CD8-positive, alpha-beta memory T cell (primary cell): ENCODE measurements at regions of chr2 and their contacts with region 1.

Region 1: DNA sequence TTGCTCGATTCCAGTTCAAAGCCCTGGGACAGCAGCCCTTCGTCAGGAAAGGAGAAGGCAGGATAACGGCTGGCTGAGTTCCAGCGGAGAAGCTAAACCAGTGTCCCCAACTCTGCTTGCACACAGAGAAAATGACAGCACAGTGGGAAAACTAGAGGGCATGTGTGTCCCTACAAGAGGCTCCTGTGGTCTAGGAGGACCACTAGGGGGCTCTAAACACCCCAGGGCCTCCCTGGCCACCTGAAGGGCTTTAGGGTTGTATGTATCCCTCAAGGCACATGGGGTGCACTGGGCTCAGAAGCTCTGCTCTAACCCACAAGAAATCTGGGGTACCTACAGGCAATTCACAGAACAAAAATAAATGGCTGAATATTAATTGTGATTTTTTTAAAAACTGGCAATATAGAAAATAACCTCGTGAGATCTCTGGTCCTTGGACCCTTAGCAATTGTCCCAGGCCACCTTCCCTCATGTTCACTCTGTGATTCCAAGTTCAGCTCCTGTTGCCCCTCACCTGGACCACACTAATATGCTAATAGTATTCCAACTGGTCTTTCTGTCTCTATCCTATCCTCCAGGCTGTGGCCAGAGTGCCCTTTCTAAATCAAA is 17.5 kb downstream of the STAT1 start:
- DNase-seq: peak in 4 of 5 donors; percentile 18 to 69 (median 35)
- H3K4me3 ChIP-seq: no peak overlapping the region
- H3K4me3 Mint-ChIP-seq: no peak overlapping the region
- H3K27ac ChIP-seq: no peak overlapping the region
- H3K27ac Mint-ChIP-seq: peak overlapping the region; percentile 4 to 87 (median 83)
- H3K4me1 ChIP-seq: no peaks in the 10 kb centered on the region
- H3K4me1 Mint-ChIP-seq: peaks cover 28 to 60% (median 53%) of the 10 kb centered on the region in 3 donors
- H3K27me3 ChIP-seq: no peaks in the 10 kb centered on the region
- H3K27me3 Mint-ChIP-seq: no peaks in the 10 kb centered on the region

Region 2: DNA sequence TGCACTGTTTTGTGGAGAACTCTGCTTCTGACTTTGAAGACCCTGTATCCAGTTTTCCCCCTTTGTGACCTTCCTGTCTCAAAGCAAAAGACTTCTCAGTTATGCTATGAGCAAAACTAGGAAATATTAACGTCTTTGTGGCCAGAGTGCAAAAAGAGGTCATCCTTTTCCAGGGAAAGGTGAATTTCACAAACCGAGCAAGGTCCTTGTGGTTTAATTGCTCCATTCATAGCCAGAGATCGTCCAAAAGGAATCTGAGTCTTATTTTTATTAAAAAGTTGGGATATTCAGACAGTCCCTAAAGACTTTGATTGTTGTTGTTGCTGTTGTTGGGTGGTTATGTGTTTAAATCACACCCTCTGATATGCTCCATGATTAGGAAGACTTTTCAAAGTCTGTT is 270.2 kb before region 1 on chr2:
- CTCF ChIA-PET with region 1: no interaction called
- POLR2A ChIA-PET with region 1: no interaction called
- DNase-seq: no peak
- H3K4me3 ChIP-seq: no peak overlapping the region
- H3K4me3 Mint-ChIP-seq: no peak overlapping the region
- H3K27ac ChIP-seq: no peak overlapping the region
- H3K27ac Mint-ChIP-seq: no peak overlapping the region
- H3K4me1 ChIP-seq: no peaks in the 10 kb centered on the region
- H3K4me1 Mint-ChIP-seq: peaks cover 9 to 20% (median 20%) of the 10 kb centered on the region in 3 donors
- H3K27me3 ChIP-seq: no peaks in the 10 kb centered on the region
- H3K27me3 Mint-ChIP-seq: peaks cover 0 to 7% of the 10 kb centered on the region in 2 donors

Region 3: DNA sequence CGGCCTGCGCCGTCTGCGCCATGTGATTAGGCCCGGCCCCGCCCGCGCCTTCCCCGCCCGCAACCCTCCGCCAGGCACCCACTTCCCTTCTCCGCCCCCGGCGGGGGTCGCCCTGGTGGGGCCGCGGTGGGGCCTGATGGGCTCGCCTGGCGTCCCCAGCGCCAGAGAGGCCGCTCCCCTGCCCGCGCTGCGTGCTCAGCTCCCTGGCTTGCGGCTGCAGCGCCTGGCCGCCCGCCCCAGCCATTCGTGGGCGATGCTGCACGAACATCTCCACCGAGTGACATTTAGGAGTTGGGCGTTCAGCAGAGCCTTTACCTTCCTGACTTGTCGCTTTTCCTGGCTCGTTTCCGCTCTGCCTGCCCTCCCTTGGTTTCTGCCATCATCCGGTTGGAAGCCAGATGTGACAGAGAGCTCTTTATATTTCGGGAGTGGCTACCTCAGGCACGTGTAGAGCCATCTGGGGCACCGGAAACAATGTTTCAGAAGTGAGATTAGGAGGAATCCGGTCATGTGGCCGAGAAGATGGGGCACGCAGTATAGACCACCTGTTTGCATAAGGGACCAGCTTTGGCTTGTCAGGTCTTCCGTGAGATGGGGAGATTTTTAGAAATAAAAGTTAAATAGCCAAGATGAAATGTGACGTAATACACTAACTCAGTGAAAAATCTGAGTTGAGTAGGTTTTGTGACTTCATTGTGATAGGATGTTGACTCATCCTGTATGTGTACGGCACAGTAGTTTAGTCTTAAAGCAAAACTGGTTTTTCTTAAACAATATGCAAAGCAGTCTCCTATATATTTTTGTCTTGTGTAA is 114.6 kb before region 1 on chr2:
- CTCF ChIA-PET with region 1: no interaction called
- POLR2A ChIA-PET with region 1: no interaction called
- DNase-seq: peak; percentile 64 to 89 (median 84)
- H3K4me3 ChIP-seq: peak overlapping the region; percentile 95
- H3K4me3 Mint-ChIP-seq: peak overlapping the region; percentile 93 to 96 (median 94)
- H3K27ac ChIP-seq: peak overlapping the region; percentile 92
- H3K27ac Mint-ChIP-seq: peak overlapping the region; percentile 95 to 99 (median 96)
- H3K4me1 ChIP-seq: peaks cover 52% of the 10 kb centered on the region
- H3K4me1 Mint-ChIP-seq: peaks cover 39 to 64% (median 52%) of the 10 kb centered on the region in 3 donors
- H3K27me3 ChIP-seq: no peaks in the 10 kb centered on the region
- H3K27me3 Mint-ChIP-seq: peaks cover 0 to 6% of the 10 kb centered on the region in 2 donors

Region 4: GRCh38 chr2:190896477-190896876 is 100.0 kb before region 1 on chr2:
- CTCF ChIA-PET with region 1: no interaction called
- POLR2A ChIA-PET with region 1: no interaction called
- DNase-seq: no peak
- H3K4me3 ChIP-seq: no peak overlapping the region
- H3K4me3 Mint-ChIP-seq: no peak overlapping the region
- H3K27ac ChIP-seq: peak overlapping the region; percentile 18
- H3K27ac Mint-ChIP-seq: peak overlapping the region in 4 of 8 donors; percentile 17 to 46 (median 35)
- H3K4me1 ChIP-seq: peaks cover 5% of the 10 kb centered on the region
- H3K4me1 Mint-ChIP-seq: peaks cover 36 to 52% (median 50%) of the 10 kb centered on the region in 3 donors
- H3K27me3 ChIP-seq: no peaks in the 10 kb centered on the region
- H3K27me3 Mint-ChIP-seq: no peaks in the 10 kb centered on the region

Region 5: GRCh38 chr2:190940454-190940853 is 56.0 kb before region 1 on chr2:
- CTCF ChIA-PET with region 1: no interaction called
- POLR2A ChIA-PET with region 1: no interaction called
- DNase-seq: no peak
- H3K4me3 ChIP-seq: no peak overlapping the region
- H3K4me3 Mint-ChIP-seq: no peak overlapping the region
- H3K27ac ChIP-seq: no peak overlapping the region
- H3K27ac Mint-ChIP-seq: peak overlapping the region in 1 of 8 donors; percentile 9
- H3K4me1 ChIP-seq: peaks cover 3% of the 10 kb centered on the region
- H3K4me1 Mint-ChIP-seq: peaks cover 4 to 26% (median 22%) of the 10 kb centered on the region in 3 donors
- H3K27me3 ChIP-seq: no peaks in the 10 kb centered on the region
- H3K27me3 Mint-ChIP-seq: no peaks in the 10 kb centered on the region

Region 6: GRCh38 chr2:191012845-191013681 is 16.6 kb after region 1 on chr2:
- CTCF ChIA-PET with region 1: interaction called, 13 read pairs
- POLR2A ChIA-PET with region 1: interaction called, 3 read pairs
- DNase-seq: no peak
- H3K4me3 ChIP-seq: peak overlapping the region; percentile 90
- H3K4me3 Mint-ChIP-seq: no peak overlapping the region
- H3K27ac ChIP-seq: peak overlapping the region; percentile 69
- H3K27ac Mint-ChIP-seq: no peak overlapping the region
- H3K4me1 ChIP-seq: peaks cover 68% of the 10 kb centered on the region
- H3K4me1 Mint-ChIP-seq: peaks cover 32 to 47% (median 36%) of the 10 kb centered on the region in 3 donors
- H3K27me3 ChIP-seq: no peaks in the 10 kb centered on the region
- H3K27me3 Mint-ChIP-seq: no peaks in the 10 kb centered on the region

Region 7: DNA sequence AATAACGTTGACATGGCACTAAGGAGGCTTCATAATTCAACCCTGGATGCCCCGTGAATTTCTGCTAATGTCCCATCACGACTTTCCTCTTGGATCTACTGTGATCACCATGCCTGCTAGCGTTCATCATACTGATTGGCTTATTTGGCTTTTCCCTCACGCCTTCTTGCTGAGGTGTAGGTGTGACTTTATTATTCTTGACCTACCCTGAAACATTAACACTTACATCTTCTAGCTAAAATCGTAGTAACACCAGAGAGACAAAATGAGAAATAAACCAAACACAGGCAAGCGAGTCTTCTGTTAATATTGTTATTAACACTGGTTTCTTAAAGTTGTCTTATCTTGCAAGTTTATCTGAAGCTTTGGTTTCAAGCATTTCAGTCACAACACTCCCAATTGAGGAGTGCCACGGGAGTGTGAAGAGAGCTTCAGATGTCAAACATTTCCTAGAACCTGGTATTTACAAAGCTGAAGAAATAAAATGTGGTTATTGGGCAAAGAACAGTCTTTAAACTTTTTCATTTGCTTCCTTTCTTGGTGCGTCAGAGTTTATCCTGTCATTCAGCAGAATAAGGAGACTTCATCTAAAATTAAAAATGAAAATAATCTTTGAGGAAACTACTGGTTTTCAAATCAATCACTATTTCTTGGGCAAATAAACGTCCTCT is 33.0 kb after region 1 on chr2:
- CTCF ChIA-PET with region 1: interaction called, 12 read pairs
- POLR2A ChIA-PET with region 1: interaction called, 3 read pairs
- DNase-seq: no peak
- H3K4me3 ChIP-seq: peak overlapping the region; percentile 24
- H3K4me3 Mint-ChIP-seq: peak overlapping the region in 6 of 7 donors; percentile 11 to 38 (median 24)
- H3K27ac ChIP-seq: no peak overlapping the region
- H3K27ac Mint-ChIP-seq: peak overlapping the region; percentile 3 to 93 (median 72)
- H3K4me1 ChIP-seq: peaks cover 30% of the 10 kb centered on the region
- H3K4me1 Mint-ChIP-seq: peaks cover 33 to 55% (median 40%) of the 10 kb centered on the region in 3 donors
- H3K27me3 ChIP-seq: no peaks in the 10 kb centered on the region
- H3K27me3 Mint-ChIP-seq: no peaks in the 10 kb centered on the region